ENCODE measurements at regions of chr11 and their contacts with region 1.

Region 1: DNA sequence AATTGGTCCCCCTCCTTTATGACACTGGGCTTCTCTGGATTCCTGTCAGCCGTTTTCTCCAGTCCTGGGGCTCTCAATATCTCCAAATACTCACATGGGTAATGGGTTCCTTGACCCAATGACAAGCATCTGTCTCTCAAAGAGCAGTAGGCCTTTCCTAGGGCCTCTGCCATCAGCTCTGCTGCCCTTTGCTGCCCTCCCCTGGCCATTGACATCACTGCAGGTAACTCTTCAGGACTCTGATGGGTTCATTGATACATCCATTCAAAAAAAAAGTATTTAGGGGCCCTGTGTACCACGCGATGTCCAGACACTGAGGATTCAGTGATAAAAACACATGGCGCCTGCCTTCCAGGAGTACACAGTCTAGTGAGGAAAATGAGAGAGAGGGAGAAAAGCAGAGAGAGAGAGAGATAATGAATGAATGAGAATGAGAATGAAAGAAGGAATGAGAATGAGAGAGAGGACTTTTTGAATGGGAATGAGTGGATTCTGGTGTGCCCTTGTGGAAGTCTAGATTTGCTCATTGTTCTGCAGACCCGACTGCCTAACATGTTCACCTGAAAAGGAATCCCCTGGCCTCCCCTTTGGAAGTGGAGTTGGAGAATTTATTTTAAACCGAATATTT is 42.6 kb upstream of the OLFML1 start:
- DNase-seq: peak; percentile 51 to 81 (median 64)
- ATAC-seq: peak in 3 of 4 donors; percentile 76 to 83 (median 82)
- H3K4me3 ChIP-seq: no peak overlapping the region
- H3K27ac ChIP-seq: no peak overlapping the region
- H3K4me1 ChIP-seq: peaks cover 0 to 11% (median 0%) of the 10 kb centered on the region in 12 donors
- H3K27me3 ChIP-seq: peaks cover 0 to 2% (median 0%) of the 10 kb centered on the region in 9 donors
- CTCF ChIP-seq: peak; percentile 72 to 91 (median 82)
- POLR2A ChIP-seq: no peak

Region 2: DNA sequence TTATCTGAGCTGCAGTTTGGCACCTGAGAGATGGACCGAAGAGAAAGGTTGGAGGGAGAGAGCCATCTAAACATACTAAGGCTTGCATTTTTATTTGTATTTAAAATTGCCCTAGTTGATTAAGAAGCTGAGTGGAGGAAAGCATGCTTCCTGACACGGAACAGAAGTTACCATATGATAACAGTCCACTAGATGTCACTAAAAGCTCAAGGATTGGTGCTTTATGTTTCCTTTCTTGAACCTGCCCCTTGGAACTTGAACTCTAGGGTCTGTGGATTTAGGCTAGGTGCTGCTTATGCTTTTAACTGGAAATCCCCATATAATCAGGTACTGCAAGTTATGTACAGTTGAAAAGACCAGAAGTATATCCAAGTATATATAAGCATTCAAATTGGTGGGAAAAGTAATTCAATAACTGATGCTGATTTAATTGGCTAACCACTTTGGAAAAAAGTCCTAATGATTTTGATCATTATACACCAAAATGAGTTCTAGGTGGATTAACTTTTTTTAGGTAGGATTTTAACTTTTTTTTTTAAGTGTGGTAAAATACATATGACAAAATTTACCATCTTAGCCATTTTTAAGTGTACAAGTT is 344.4 kb before region 1 on chr11:
- intact Hi-C with region 1: loop called in 9 of 10 experiments (anchors 2 to 10 kb)
- DNase-seq: no peak
- ATAC-seq: peak in 3 of 4 donors; percentile 15 to 72 (median 66)
- H3K4me3 ChIP-seq: no peak overlapping the region
- H3K27ac ChIP-seq: no peak overlapping the region
- H3K4me1 ChIP-seq: no peaks in the 10 kb centered on the region
- H3K27me3 ChIP-seq: peaks cover 0 to 27% (median 0%) of the 10 kb centered on the region in 9 donors
- CTCF ChIP-seq: peak; percentile 39 to 76 (median 59)
- POLR2A ChIP-seq: no peak

Region 3: GRCh38 chr11:7143908-7144307 is 298.8 kb before region 1 on chr11:
- intact Hi-C with region 1: loop called in 3 of 10 experiments (anchors 2 to 5 kb)
- DNase-seq: no peak
- ATAC-seq: no peak
- H3K4me3 ChIP-seq: no peak overlapping the region
- H3K27ac ChIP-seq: no peak overlapping the region
- H3K4me1 ChIP-seq: no peaks in the 10 kb centered on the region
- H3K27me3 ChIP-seq: peaks cover 0 to 5% (median 0%) of the 10 kb centered on the region in 9 donors
- CTCF ChIP-seq: peak in 9 of 12 donors; percentile 8 to 50 (median 37)
- POLR2A ChIP-seq: no peak

Region 4: GRCh38 chr11:7353100-7353499 is 89.6 kb before region 1 on chr11:
- intact Hi-C with region 1: loop called in 3 of 10 experiments (anchors 2 to 10 kb)
- DNase-seq: no peak
- ATAC-seq: peak in 1 of 4 donors; percentile 55
- H3K4me3 ChIP-seq: no peak overlapping the region
- H3K27ac ChIP-seq: no peak overlapping the region
- H3K4me1 ChIP-seq: no peaks in the 10 kb centered on the region
- H3K27me3 ChIP-seq: peaks cover 0 to 4% (median 0%) of the 10 kb centered on the region in 9 donors
- CTCF ChIP-seq: peak in 9 of 12 donors; percentile 19 to 43 (median 30)
- POLR2A ChIP-seq: no peak

Region 5: GRCh38 chr11:7638710-7639642 is 196.3 kb after region 1 on chr11:
- intact Hi-C with region 1: no loop called
- DNase-seq: peak in 1 of 5 donors; percentile 44
- ATAC-seq: peak in 2 of 4 donors; percentile 34 to 44
- H3K4me3 ChIP-seq: no peak overlapping the region
- H3K27ac ChIP-seq: peak overlapping the region in 5 of 12 donors; percentile 19 to 80 (median 68)
- H3K4me1 ChIP-seq: peaks cover 0 to 19% (median 9%) of the 10 kb centered on the region in 12 donors
- H3K27me3 ChIP-seq: no peaks in the 10 kb centered on the region
- CTCF ChIP-seq: no peak
- POLR2A ChIP-seq: no peak

Region 6: GRCh38 chr11:7657306-7658025 is 214.8 kb after region 1 on chr11:
- intact Hi-C with region 1: loop called in 1 of 10 experiments (anchors 10 kb)
- DNase-seq: peak in 3 of 5 donors; percentile 43 to 75 (median 62)
- ATAC-seq: peak; percentile 75 to 98 (median 93)
- H3K4me3 ChIP-seq: no peak overlapping the region
- H3K27ac ChIP-seq: peak overlapping the region in 2 of 12 donors; percentile 31 to 55
- H3K4me1 ChIP-seq: peaks cover 0 to 19% (median 8%) of the 10 kb centered on the region in 12 donors
- H3K27me3 ChIP-seq: no peaks in the 10 kb centered on the region
- CTCF ChIP-seq: peak; percentile 31 to 66 (median 57)
- POLR2A ChIP-seq: no peak

Measured in heart left ventricle (tissue), 16 donors.